ENCODE measurements at regions of chr6 and their contacts with region 1.

Region 1: DNA sequence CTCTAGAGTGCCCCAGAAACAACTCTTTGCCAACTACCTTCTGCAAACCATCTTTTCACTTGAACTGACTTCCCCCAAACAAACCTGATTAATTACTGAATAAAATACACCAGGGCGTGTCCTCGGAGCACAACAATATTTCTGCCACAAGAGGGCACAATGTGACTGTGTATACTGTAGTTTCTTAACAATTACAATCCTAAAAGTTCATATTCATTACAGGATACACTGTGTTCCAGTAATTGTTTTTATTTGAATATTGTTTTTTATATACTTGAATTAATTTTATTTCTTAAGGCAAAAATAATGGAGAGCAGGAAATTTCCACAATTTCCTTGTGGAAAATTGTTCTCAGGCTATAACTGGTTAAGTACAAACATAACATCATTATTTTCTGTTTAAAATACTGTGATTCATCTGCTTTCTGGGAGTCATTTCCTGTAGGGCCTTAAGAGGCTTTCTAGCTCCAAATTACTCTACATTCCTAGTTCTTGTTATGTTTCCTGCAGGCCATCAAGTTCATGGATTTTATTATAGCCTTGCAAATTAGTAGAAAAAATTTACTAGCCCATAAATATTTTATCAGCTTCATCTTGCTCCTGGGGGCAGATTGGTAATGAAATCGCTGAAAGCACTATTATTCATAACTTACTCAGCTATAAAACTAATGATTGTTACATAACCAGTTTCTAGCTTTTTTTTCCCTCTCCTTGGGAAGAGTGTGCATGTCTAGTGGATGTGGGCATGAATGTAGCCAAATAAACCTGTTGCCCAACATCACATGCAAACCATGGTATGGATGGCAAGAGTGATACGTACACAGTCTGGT is 51.9 kb upstream of the SLC22A16 start:
- DNase-seq: peak in 4 of 5 donors; percentile 57 to 61 (median 60)
- H3K4me3 ChIP-seq: no peak overlapping the region
- H3K4me3 Mint-ChIP-seq: no peak overlapping the region
- H3K27ac ChIP-seq: no peak overlapping the region
- H3K27ac Mint-ChIP-seq: no peak overlapping the region
- H3K4me1 ChIP-seq: no peaks in the 10 kb centered on the region
- H3K4me1 Mint-ChIP-seq: peaks cover 0 to 7% (median 3%) of the 10 kb centered on the region in 4 donors
- H3K27me3 ChIP-seq: no peaks in the 10 kb centered on the region
- H3K27me3 Mint-ChIP-seq: no peaks in the 10 kb centered on the region

Region 2: DNA sequence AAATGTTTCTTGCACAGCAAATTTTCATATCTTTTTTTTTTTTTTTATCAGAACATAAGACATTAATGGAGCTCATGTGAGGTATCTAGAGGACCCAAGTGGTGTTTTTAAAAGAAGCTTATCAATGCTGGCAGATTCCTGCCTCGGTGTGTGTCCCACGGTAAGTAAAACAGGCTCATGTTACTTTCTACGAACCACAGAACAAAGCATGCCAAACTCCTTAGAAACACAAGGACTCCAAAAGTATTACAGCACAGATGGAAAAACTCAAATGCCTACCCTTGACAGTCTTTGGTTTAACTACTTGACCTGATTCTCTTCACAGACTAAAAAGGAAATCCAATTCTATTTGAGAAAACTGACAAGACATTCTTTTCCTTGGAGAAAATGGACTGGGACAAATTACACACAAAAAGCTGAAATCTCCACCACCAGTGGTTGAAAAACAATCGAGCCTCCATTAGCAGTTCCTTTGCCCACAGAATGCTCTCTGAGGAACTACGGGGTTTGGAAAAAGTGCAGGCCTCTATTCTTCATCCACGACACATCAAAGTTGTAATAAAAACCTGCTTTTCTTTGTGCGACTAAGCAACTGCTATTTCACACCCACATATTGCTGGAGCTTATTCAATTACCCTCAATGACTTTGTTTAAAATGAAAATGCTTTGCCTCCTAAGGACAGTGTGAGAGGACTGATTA is 175.6 kb before region 1 on chr6:
- CTCF ChIA-PET with region 1: no interaction called
- POLR2A ChIA-PET with region 1: no interaction called
- intact Hi-C with region 1: no loop called
- DNase-seq: no peak
- H3K4me3 ChIP-seq: no peak overlapping the region
- H3K4me3 Mint-ChIP-seq: no peak overlapping the region
- H3K27ac ChIP-seq: no peak overlapping the region
- H3K27ac Mint-ChIP-seq: no peak overlapping the region
- H3K4me1 ChIP-seq: no peaks in the 10 kb centered on the region
- H3K4me1 Mint-ChIP-seq: peaks cover 7 to 13% (median 10%) of the 10 kb centered on the region in 4 donors
- H3K27me3 ChIP-seq: peaks cover 6% of the 10 kb centered on the region
- H3K27me3 Mint-ChIP-seq: peaks cover 23 to 36% of the 10 kb centered on the region in 2 donors

Region 3: DNA sequence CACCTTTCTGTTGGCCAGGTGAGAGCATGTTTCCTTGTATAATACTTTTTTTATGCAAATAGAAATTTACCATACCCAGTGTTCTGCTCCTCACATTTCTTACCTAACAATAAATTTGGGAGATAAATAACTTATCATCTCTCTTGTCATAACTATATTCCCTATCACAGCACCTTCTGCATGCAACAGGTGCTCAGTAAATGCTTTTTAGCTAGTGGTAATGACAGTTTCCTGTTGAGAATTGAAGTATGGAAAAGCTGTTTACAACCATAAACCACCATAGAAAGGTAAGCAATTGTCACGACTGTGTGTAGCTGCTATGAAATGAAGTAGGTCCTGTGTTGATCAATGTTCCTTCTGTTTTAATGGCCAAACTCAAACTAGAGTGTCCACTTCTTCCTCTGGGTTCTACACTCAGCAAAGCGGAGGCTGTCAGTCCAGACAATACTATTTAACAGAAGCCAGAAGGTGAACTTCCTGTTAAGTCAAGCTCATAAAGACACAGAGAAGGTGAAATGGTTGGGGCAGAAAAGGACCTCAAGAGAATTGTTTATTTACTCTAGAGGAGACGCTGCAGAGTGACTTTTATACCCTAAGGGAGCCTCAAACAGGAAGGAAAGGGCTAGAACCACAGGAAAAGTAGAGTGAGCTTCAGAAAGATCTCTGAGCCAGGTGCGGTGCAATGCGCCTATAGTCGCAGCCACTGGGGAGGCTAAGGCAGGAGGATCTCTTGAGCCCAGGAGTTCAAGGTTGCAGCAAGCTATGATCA is 32.1 kb after region 1 on chr6:
- CTCF ChIA-PET with region 1: interaction called, 11 read pairs
- POLR2A ChIA-PET with region 1: interaction called, 6 read pairs
- intact Hi-C with region 1: no loop called
- DNase-seq: peak in 4 of 5 donors; percentile 28 to 49 (median 41)
- H3K4me3 ChIP-seq: peak overlapping the region in 1 of 2 donors; percentile 12
- H3K4me3 Mint-ChIP-seq: peak overlapping the region; percentile 29 to 81 (median 76)
- H3K27ac ChIP-seq: peak overlapping the region; percentile 23
- H3K27ac Mint-ChIP-seq: peak overlapping the region; percentile 79 to 93 (median 91)
- H3K4me1 ChIP-seq: peaks cover 44% of the 10 kb centered on the region
- H3K4me1 Mint-ChIP-seq: peaks cover 38 to 74% (median 52%) of the 10 kb centered on the region in 4 donors
- H3K27me3 ChIP-seq: no peaks in the 10 kb centered on the region
- H3K27me3 Mint-ChIP-seq: no peaks in the 10 kb centered on the region

Region 4: GRCh38 chr6:110949679-110950285 is 421.5 kb after region 1 on chr6:
- CTCF ChIA-PET with region 1: interaction called, 71 read pairs
- POLR2A ChIA-PET with region 1: no interaction called
- intact Hi-C with region 1: loop called (anchors 1 kb)
- DNase-seq: peak in 4 of 5 donors; percentile 37 to 47 (median 40)
- H3K4me3 ChIP-seq: no peak overlapping the region
- H3K4me3 Mint-ChIP-seq: no peak overlapping the region
- H3K27ac ChIP-seq: no peak overlapping the region
- H3K27ac Mint-ChIP-seq: peak overlapping the region in 2 of 7 donors; percentile 23 to 42
- H3K4me1 ChIP-seq: no peaks in the 10 kb centered on the region
- H3K4me1 Mint-ChIP-seq: peaks cover 0 to 5% (median 2%) of the 10 kb centered on the region in 4 donors
- H3K27me3 ChIP-seq: no peaks in the 10 kb centered on the region
- H3K27me3 Mint-ChIP-seq: no peaks in the 10 kb centered on the region

Region 5: DNA sequence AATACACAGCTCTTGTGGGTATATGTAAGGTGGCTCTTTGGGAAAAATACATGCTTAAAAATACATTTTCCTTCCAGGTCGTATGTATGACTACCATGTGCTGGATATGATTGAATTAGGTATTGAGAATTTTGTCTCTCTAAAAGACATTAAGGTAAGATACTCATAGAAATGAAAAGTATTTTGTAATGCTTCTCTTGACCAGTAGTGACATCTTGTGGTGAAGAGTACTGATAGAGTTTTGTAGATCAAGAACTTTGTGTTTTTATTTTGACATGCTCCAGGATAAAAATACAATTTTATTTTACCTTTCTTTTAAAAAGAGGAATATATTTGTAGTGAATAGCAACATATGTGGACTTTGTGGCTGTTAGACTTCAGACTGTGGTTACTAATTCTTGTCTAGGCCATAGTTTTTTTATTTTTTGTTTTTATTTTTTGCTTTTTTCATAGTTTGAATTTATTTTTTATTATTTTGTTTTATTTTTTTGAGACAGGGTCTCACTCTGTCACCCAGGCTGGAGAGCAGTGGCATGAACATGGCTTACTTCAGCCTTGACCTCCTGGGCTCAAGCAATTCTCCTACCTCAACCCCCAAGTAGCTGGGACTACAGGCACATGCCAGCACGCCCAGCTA is 471.4 kb after region 1 on chr6:
- CTCF ChIA-PET with region 1: interaction called, 14 read pairs
- POLR2A ChIA-PET with region 1: no interaction called
- intact Hi-C with region 1: loop called (anchors 1 kb)
- DNase-seq: peak in 4 of 5 donors; percentile 21 to 35 (median 25)
- H3K4me3 ChIP-seq: no peak overlapping the region
- H3K4me3 Mint-ChIP-seq: no peak overlapping the region
- H3K27ac ChIP-seq: no peak overlapping the region
- H3K27ac Mint-ChIP-seq: peak overlapping the region in 2 of 7 donors; percentile 27 to 51
- H3K4me1 ChIP-seq: no peaks in the 10 kb centered on the region
- H3K4me1 Mint-ChIP-seq: peaks cover 0 to 4% (median 1%) of the 10 kb centered on the region in 4 donors
- H3K27me3 ChIP-seq: no peaks in the 10 kb centered on the region
- H3K27me3 Mint-ChIP-seq: no peaks in the 10 kb centered on the region

Measured in CD4-positive, alpha-beta memory T cell (primary cell).